ENCODE measurements at regions of chr13 and their contacts with region 1.

Region 1: DNA sequence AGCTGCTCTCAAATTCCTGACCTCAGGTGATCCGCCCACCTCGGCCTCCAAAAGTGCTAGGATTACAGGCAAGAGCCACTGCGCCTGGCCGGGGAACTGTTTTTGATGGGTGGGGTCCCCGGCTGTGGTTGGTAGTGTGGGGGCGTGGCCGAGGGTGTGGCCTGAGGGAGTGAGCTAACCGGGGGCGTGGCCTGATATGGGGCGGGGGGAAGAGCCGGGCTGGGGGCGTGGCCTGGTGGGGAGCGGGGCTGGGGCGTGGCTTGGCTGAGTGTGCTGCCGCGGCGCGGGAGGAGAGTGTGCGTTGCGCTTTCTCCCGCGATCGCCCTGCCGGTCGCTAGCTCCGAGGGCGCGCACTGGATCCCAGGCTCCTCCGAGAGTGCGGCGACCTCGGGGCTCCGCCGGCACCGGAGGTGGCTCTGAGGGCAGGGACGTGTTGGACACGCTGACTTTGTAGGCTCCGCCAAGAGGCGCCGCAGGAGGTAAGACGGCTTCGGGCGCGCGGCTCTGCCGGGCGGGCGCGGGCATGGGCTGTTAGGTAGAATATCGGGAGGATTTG is at the start of gene SPATA13:
- DNase-seq: peak; percentile 63 to 94
- H3K4me3 ChIP-seq: peak within 1 kb of the TSS; percentile 61 to 89
- H3K27ac ChIP-seq: peak within 1 kb of the TSS in 1 of 2 donors; percentile 41
- H3K4me1 ChIP-seq: no peaks in the 10 kb centered on the region
- H3K27me3 ChIP-seq: no peaks in the 10 kb centered on the region
- CTCF ChIP-seq: no peak
- total RNA-seq, gene SPATA13: 38.2 TPM

Region 2: GRCh38 chr13:24220086-24220703 is 59.7 kb after region 1 on chr13:
- intact Hi-C with region 1: loop called (anchors 5 kb)
- DNase-seq: peak in 1 of 2 donors; percentile 78
- H3K4me3 ChIP-seq: no peak overlapping the region
- H3K27ac ChIP-seq: no peak overlapping the region
- H3K4me1 ChIP-seq: peaks cover 0 to 3% of the 10 kb centered on the region in 2 donors
- H3K27me3 ChIP-seq: no peaks in the 10 kb centered on the region
- CTCF ChIP-seq: peak; percentile 70 to 76 (median 71)

Region 3: GRCh38 chr13:24270639-24271141 is 110.2 kb after region 1 on chr13:
- intact Hi-C with region 1: no loop called
- DNase-seq: peak; percentile 61 to 87
- H3K4me3 ChIP-seq: peak overlapping the region; percentile 50 to 64
- H3K27ac ChIP-seq: peak overlapping the region; percentile 85 to 88
- H3K4me1 ChIP-seq: peaks cover 0 to 10% of the 10 kb centered on the region in 2 donors
- H3K27me3 ChIP-seq: no peaks in the 10 kb centered on the region
- CTCF ChIP-seq: peak in 1 of 3 experiments; percentile 78

Region 4: GRCh38 chr13:24644036-24644435 is 483.5 kb after region 1 on chr13:
- intact Hi-C with region 1: no loop called
- DNase-seq: no peak
- H3K4me3 ChIP-seq: no peak overlapping the region
- H3K27ac ChIP-seq: no peak overlapping the region
- H3K4me1 ChIP-seq: no peaks in the 10 kb centered on the region
- H3K27me3 ChIP-seq: no peaks in the 10 kb centered on the region
- CTCF ChIP-seq: no peak